ENCODE measurements at regions of chr15 and their contacts with region 1.

Region 1: DNA sequence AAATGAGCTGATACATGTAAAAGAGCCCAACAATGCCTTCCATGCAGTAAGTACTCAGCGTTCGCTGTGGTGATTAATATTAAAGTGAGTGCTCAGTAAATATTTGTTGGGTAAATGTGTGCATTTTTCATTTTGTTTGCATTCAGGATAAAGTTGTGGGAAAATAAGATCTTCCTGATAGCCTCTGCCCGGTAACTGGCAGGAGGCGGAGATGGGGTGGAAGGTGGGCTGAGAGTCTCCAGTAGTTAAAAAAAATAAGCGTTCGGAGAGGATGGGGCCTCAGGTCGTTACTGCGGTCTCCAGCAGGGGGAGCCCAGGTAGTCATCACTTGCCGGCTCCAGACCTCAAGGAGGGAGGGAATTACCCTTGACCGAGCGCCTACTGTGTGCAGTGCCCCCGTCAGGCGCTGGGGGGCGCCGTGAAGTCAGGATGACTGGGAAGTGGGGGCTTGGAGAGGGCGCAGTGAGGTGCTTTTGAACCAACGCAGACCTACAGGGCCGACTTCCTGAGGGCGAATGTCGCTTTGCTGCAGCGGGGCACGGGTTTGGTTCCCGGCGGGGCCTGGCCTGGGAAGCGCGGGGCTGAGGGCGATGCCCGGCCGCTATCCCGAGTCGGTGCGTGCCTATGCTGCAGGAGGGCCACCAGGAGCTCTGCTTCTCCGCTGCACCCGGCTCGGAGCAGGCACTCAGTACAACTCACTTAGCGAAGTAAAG is 80.1 kb downstream of the RHCG start:
- DNase-seq: no peak
- H3K4me3 ChIP-seq: no peak overlapping the region
- H3K27me3 ChIP-seq: peaks cover 54% of the 10 kb centered on the region
- CTCF ChIP-seq: peak; percentile 82

Region 2: DNA sequence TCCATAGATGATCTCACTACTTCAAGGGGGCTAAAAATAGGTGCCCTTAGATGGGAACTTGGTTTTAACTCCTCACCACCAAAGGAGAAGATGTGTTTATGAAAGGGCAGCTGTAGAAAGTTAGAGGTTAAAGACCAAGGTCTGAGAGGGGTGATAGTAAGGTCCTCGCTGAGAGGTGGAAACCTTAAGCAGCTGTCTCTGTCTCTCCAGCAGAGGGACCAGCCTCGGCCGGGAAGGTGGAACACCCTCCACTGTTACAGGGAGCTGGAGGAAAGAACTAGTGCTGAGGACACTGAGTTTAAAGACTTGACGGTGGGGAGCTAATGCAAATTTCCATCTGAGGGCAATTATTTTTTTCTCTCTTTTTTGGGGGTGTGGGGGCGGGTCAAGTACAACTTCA is 186.0 kb before region 1 on chr15:
- CTCF ChIA-PET with region 1: no interaction called
- POLR2A ChIA-PET with region 1: no interaction called
- DNase-seq: no peak
- H3K4me3 ChIP-seq: no peak overlapping the region
- H3K27me3 ChIP-seq: no peaks in the 10 kb centered on the region; the same call in 1 of the 2 replicates
- CTCF ChIP-seq: peak; percentile 38

Region 3: DNA sequence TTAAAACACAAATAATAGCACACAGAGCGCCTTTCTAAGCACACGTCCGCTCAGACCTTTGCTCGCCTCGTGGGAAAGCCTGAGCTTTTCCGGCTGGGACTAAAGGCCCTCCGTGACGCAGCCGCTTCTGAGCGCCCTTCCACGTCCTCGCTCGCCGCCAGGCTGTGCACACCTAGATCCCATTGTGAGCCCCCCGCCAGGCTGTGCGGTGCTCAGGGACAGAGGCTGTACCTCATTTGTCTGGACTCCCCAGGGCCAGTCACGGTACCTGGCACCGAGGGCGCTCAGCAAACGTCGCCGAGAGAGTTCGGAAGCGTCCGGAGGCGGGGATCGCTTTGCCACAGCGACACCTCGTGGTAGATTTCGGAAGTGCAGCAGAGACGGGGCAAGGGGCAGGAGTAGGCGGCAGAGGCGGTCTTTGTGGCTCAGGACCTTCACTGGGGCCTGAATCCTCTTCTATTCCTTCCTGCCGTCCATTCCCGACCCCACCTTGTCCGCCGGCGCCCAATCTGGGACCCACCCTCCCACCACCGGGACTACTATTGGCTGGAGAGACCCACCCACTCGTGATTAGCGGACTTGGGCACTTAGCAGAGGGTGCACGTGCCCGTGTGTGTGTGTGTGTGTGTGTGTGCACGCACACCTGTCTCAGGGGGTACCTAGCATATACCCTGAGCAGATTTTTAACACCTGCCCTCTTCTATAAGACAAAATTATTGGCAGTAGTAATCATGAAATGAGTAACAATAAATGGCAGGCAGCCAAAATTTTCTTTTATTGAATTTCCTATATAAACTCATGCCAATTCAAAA is 14.4 kb after region 1 on chr15:
- CTCF ChIA-PET with region 1: interaction called, 30 read pairs
- POLR2A ChIA-PET with region 1: no interaction called
- DNase-seq: peak; percentile 6
- H3K4me3 ChIP-seq: peak overlapping the region; percentile 35
- H3K27me3 ChIP-seq: peaks cover 11% of the 10 kb centered on the region
- CTCF ChIP-seq: peak; percentile 97